ENCODE measurements at regions of chr7 and their contacts with region 1.

Region 1: DNA sequence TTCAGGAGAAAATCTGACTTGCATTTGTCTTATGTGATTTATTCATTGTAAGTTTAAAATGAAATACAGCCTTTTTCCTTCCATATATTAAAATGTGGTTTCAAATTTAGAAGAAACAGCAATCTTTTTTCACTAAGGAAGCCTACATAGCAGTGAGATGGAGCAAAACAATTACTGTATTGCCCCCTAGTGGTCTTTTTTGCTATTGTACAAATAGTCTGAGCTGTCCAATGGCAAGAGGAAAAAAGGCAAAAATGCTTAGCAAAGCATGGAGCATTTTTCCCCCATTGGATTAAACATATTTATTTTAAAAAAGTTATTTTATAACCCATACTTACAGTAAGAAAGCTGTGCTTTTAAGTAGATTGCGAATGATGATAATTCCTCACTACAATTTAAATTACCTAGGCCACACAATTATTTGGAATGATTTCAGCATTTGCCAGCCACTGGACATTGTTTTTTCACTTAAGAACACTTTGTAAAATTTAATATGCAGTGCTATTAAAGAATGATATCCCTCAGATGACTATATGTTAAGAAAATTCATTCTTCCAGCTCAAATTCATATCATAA is 119.5 kb downstream of the CPED1 start:
- DNase-seq: no peak
- ATAC-seq: peak; percentile 79 to 82
- H3K4me3 ChIP-seq: no peak overlapping the region
- H3K27ac ChIP-seq: peak overlapping the region in 3 of 4 donors; percentile 12 to 47 (median 24)
- H3K4me1 ChIP-seq: peaks cover 14 to 22% of the 10 kb centered on the region in 2 donors
- H3K27me3 ChIP-seq: no peaks in the 10 kb centered on the region
- CTCF ChIP-seq: peak; percentile 69 to 76 (median 73)
- POLR2A ChIP-seq: no peak

Region 2: GRCh38 chr7:120792091-120792860 is 315.7 kb before region 1 on chr7:
- in situ Hi-C with region 1: no loop called
- intact Hi-C with region 1: loop called (anchors 5 kb)
- DNase-seq: peak; percentile 22
- ATAC-seq: no peak
- H3K4me3 ChIP-seq: no peak overlapping the region
- H3K27ac ChIP-seq: no peak overlapping the region
- H3K4me1 ChIP-seq: no peaks in the 10 kb centered on the region
- H3K27me3 ChIP-seq: no peaks in the 10 kb centered on the region
- CTCF ChIP-seq: peak in 4 of 5 experiments; percentile 39 to 73 (median 62)
- POLR2A ChIP-seq: no peak

Region 3: GRCh38 chr7:120933475-120933874 is 174.5 kb before region 1 on chr7:
- in situ Hi-C with region 1: no loop called
- intact Hi-C with region 1: no loop called
- DNase-seq: no peak
- ATAC-seq: no peak
- H3K4me3 ChIP-seq: no peak overlapping the region
- H3K27ac ChIP-seq: no peak overlapping the region
- H3K4me1 ChIP-seq: no peaks in the 10 kb centered on the region
- H3K27me3 ChIP-seq: no peaks in the 10 kb centered on the region
- CTCF ChIP-seq: no peak
- POLR2A ChIP-seq: no peak

Region 4: GRCh38 chr7:120987683-120988590 is 120.1 kb before region 1 on chr7:
- in situ Hi-C with region 1: loop called in 1 of 4 experiments (anchors 10 kb)
- intact Hi-C with region 1: loop called (anchors 1 kb)
- DNase-seq: peak; percentile 84 to 91
- ATAC-seq: peak; percentile 60 to 76
- H3K4me3 ChIP-seq: peak overlapping the region; percentile 65 to 72 (median 66)
- H3K27ac ChIP-seq: peak overlapping the region; percentile 91 to 98 (median 94)
- H3K4me1 ChIP-seq: peaks cover 10 to 21% of the 10 kb centered on the region in 2 donors
- H3K27me3 ChIP-seq: no peaks in the 10 kb centered on the region
- CTCF ChIP-seq: peak; percentile 83 to 96 (median 94)
- POLR2A ChIP-seq: no peak

Measured in gastrocnemius medialis (tissue), 4 donors.